Common myeloid progenitor, CD34-positive (primary cell): ENCODE measurements at regions of chr19 and their contacts with region 1.

Region 1: DNA sequence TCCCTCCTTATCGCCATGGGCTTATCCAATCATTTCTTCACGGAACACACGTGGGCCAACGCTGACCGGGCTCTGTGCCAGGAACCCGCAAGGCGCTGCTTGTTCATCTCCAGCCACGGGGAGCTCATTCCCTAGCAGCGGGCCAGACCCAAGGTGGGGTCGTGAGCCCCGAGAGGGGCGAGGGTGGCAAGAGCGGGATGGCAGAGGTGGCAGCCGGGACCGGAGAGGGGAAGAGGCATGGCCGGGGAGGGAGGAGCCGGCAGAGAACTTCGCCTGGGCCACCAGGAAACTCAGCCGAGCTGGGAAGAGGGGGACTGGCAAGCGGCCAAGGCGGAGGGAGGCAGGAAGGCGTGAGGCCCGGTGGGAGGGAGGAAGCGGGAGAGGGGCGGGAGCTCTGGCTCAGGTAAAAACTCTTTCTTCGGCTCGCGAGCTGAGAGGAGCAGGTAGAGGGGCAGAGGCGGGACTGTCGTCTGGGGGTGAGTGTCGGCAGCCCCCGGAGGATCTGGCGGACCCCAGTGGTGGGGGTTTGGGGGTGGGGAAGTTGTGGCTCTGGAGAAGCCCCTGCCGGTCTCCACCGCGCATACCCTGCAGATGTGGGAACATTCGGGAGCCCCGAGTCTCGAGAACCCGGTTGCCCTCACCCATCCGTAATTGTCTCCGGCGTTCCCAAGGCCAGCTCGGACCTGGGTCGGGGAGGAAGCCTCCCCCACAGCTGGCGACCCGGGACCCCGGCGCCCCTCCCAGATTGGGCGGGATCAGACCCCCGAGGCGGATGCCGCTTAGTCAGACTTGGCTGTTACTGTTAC is at the start of gene B3GNT3:
- DNase-seq: peak in 1 of 3 donors; percentile 41
- H3K4me3 ChIP-seq: peak within 1 kb of the TSS in 6 of 7 experiments; percentile 26 to 72 (median 57)
- H3K27ac ChIP-seq: no peak within 1 kb of the TSS
- H3K4me1 ChIP-seq: peaks cover 2 to 59% (median 51%) of the 10 kb centered on the region in 4 experiments
- H3K27me3 ChIP-seq: no peaks in the 10 kb centered on the region

Region 2: GRCh38 chr19:17703824-17704463 is 91.0 kb before region 1 on chr19:
- CTCF ChIA-PET with region 1: no interaction called
- POLR2A ChIA-PET with region 1: no interaction called
- DNase-seq: peak; percentile 61 to 84 (median 83)
- H3K4me3 ChIP-seq: no peak overlapping the region
- H3K27ac ChIP-seq: no peak overlapping the region
- H3K4me1 ChIP-seq: peaks cover 0 to 3% (median under 1%) of the 10 kb centered on the region in 4 experiments
- H3K27me3 ChIP-seq: peaks cover 0 to 4% (median 0%) of the 10 kb centered on the region in 5 experiments

Region 3: GRCh38 chr19:17847538-17848366 is 52.8 kb after region 1 on chr19 and contains the start of gene JAK3:
- CTCF ChIA-PET with region 1: interaction called, 36 read pairs
- POLR2A ChIA-PET with region 1: interaction called, 14 read pairs
- DNase-seq: peak; percentile 85 to 92 (median 91)
- H3K4me3 ChIP-seq: peak within 1 kb of the TSS; percentile 40 to 76 (median 69)
- H3K27ac ChIP-seq: peak within 1 kb of the TSS; percentile 75 to 94
- H3K4me1 ChIP-seq: peaks cover 5 to 69% (median 63%) of the 10 kb centered on the region in 4 experiments
- H3K27me3 ChIP-seq: no peaks in the 10 kb centered on the region

Region 4: DNA sequence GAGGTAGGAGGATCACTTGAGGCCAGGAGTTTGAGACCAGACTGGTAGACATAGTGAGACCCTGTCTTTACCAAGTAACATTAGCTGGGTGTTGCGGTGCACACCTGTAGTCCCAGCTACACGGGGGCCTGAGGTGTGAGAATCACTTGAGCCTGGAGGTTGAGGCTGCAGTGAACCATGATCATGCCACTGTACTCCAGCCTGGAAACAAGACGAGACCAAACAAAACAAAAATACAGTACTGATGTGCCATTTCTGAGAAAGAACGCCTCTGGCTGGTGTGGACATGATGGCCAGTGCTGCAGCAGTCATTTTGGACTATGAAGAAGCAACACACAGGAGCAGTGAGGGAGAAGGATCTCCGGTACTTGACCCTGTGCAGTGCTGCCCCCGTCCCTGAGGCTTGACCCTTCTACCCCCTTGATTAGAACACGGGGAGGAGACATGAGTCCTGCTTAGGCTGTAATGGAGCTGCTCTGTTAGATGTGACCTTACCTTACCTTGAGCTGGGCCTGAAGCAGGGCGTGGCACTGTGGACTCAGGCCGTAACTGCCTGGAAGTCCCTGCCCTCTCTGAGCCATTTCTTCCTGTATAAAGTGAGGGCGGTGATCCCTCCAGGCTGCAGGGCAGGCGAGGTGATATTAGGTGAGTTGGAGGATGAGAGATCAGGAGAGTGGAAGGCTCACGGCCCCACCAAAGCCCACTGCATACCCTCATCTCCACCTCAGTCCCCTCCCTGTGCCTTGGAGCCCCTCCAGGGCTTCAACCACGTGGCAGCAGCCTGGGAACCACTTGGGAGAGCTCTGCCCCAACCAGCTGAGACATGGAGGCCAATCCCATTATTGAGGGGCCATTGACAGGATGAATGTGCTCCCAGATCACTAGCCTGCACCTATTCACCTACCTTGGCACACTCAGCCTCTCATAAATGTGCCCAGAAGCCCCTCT is 70.7 kb after region 1 on chr19:
- CTCF ChIA-PET with region 1: no interaction called
- POLR2A ChIA-PET with region 1: no interaction called
- DNase-seq: no peak
- H3K4me3 ChIP-seq: no peak overlapping the region
- H3K27ac ChIP-seq: peak overlapping the region in 1 of 2 experiments; percentile 40
- H3K4me1 ChIP-seq: peaks cover 4 to 13% (median 12%) of the 10 kb centered on the region in 4 experiments
- H3K27me3 ChIP-seq: no peaks in the 10 kb centered on the region